Natural killer cell (primary cell): ENCODE measurements at regions of chr20 and their contacts with region 1.

Region 1: GRCh38 chr20:8722276-8722928 is 346.5 kb upstream of the PLCB4 start:
- DNase-seq: peak in 1 of 2 donors; percentile 73
- ATAC-seq: peak; percentile 73 to 81 (median 73)
- H3K4me3 ChIP-seq: no peak overlapping the region
- H3K4me3 Mint-ChIP-seq: no peak overlapping the region
- H3K27ac ChIP-seq: no peak overlapping the region
- H3K27ac Mint-ChIP-seq: no peak overlapping the region
- H3K4me1 ChIP-seq: no peaks in the 10 kb centered on the region
- H3K4me1 Mint-ChIP-seq: no peaks in the 10 kb centered on the region
- H3K27me3 ChIP-seq: no peaks in the 10 kb centered on the region
- H3K27me3 Mint-ChIP-seq: no peaks in the 10 kb centered on the region
- CTCF ChIP-seq: peak; percentile 94

Region 2: DNA sequence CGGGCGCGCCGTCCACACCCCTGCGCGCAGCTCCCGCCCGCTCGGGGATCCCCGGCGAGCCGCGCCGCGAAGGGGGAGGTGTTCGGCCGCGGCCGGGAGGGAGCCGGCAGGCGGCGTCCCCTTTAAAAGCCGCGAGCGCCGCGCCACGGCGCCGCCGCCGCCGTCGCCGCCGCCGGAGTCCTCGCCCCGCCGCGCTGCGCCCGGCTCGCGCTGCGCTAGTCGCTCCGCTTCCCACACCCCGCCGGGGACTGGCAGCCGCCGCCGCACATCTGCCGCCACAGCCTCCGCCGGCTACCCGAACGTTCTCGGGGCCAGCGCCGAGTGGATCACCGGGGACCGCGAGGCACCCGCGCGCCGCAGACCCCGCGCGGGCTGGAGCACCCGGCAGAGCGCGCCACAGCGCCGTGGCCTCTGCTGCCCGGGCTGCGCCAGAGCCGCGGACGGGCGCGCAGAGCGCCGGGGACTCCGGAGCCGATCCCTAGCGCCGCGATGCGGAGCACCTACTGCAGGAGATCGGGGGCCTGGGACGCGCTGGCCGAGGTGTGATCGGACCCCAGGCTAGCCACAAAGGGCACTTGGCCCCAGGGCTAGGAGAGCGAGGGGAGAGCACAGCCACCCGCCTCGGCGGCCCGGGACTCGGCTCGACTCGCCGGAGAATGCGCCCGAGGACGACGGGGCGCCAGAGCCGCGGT is 1954.7 kb before region 1 on chr20 and contains the start of gene BMP2:
- intact Hi-C with region 1: loop called (anchors 10 kb)
- DNase-seq: peak in 1 of 2 donors; percentile 15
- ATAC-seq: peak; percentile 40 to 75 (median 67)
- H3K4me3 ChIP-seq: peak within 1 kb of the TSS; percentile 43
- H3K4me3 Mint-ChIP-seq: peak within 1 kb of the TSS; percentile 71
- H3K27ac ChIP-seq: peak within 1 kb of the TSS; percentile 30
- H3K27ac Mint-ChIP-seq: no peak within 1 kb of the TSS
- H3K4me1 ChIP-seq: peaks cover 21% of the 10 kb centered on the region
- H3K4me1 Mint-ChIP-seq: peaks cover 7 to 10% of the 10 kb centered on the region in 2 donors
- H3K27me3 ChIP-seq: peaks cover 9% of the 10 kb centered on the region
- H3K27me3 Mint-ChIP-seq: peaks cover 32 to 39% of the 10 kb centered on the region in 2 donors
- CTCF ChIP-seq: no peak
- total RNA-seq, gene BMP2: 0.45 to 0.66 (median 0.45) TPM

Region 3: GRCh38 chr20:6828794-6829423 is 1893.5 kb before region 1 on chr20:
- intact Hi-C with region 1: loop called (anchors 5 kb)
- DNase-seq: peak; percentile 15 to 36
- ATAC-seq: peak; percentile 63 to 79 (median 63)
- H3K4me3 ChIP-seq: no peak overlapping the region
- H3K4me3 Mint-ChIP-seq: no peak overlapping the region
- H3K27ac ChIP-seq: no peak overlapping the region
- H3K27ac Mint-ChIP-seq: no peak overlapping the region
- H3K4me1 ChIP-seq: no peaks in the 10 kb centered on the region
- H3K4me1 Mint-ChIP-seq: no peaks in the 10 kb centered on the region
- H3K27me3 ChIP-seq: no peaks in the 10 kb centered on the region
- H3K27me3 Mint-ChIP-seq: no peaks in the 10 kb centered on the region
- CTCF ChIP-seq: peak; percentile 46

Region 4: DNA sequence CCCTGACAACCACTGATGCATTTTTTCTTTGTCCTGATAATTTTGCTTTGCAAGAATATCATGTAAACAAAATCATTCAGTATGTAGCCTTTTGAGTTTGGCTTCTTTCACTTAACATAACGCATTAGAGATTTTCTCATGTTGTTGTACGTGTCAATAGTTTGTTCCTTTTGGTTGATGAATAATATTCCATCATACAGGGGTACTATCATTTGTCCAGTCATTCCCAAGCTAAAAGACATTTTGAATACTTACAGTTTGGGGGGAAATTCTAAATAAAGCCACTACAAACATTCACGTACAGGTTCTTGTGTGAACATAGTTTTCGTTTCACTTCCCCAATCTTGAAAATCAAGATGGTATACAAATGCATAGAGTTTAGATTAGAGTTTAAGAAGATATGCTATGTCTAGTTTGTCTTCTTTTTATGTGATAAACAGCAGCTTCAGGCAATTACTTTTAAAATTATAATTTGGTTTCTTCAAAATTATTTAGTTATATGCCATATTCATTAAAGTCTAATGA is 787.3 kb before region 1 on chr20:
- intact Hi-C with region 1: loop called (anchors 1 kb)
- DNase-seq: no peak
- ATAC-seq: no peak
- H3K4me3 ChIP-seq: no peak overlapping the region
- H3K4me3 Mint-ChIP-seq: no peak overlapping the region
- H3K27ac ChIP-seq: no peak overlapping the region
- H3K27ac Mint-ChIP-seq: no peak overlapping the region
- H3K4me1 ChIP-seq: no peaks in the 10 kb centered on the region
- H3K4me1 Mint-ChIP-seq: peaks cover 0 to 6% of the 10 kb centered on the region in 2 donors
- H3K27me3 ChIP-seq: no peaks in the 10 kb centered on the region
- H3K27me3 Mint-ChIP-seq: peaks cover 12 to 23% of the 10 kb centered on the region in 2 donors
- CTCF ChIP-seq: no peak

Region 5: DNA sequence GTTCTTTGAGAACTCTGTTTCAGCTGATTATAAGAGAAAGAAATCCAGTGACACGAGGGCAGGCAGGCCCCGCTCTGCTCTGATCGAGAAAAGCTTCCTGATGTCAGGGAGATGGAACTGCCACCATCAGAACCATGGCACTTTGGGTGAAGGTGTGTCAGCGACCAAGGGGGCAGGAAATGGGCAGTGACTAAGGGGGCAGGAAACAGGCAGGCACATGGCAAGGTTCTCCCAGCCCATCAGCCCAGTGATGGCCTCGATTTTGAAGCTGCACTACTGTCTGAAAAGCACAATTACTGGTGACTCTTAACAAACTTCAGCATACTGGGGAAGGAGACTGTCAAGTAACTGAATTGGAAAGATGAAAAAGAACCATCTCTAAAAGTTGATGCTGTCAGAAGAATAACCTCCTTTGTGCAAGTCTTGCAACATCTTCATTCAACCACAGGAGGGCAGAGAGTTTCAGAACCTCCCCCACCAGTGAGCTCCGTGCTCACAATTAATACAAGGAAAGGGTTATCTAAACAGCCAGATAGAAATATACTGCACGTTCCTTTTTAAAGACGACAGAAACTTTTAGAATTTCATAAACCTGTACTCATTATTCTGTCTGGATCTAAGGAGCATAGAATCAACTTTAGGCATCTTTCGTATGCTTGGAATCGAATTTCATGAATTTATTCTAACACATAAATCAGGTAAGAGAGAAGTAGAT is 741.9 kb before region 1 on chr20:
- intact Hi-C with region 1: loop called (anchors 2 kb)
- DNase-seq: peak in 1 of 2 donors; percentile 35
- ATAC-seq: peak; percentile 56 to 69 (median 62)
- H3K4me3 ChIP-seq: no peak overlapping the region
- H3K4me3 Mint-ChIP-seq: no peak overlapping the region
- H3K27ac ChIP-seq: no peak overlapping the region
- H3K27ac Mint-ChIP-seq: peak overlapping the region; percentile 0 to 62
- H3K4me1 ChIP-seq: peaks cover 4% of the 10 kb centered on the region
- H3K4me1 Mint-ChIP-seq: peaks cover 10 to 13% of the 10 kb centered on the region in 2 donors
- H3K27me3 ChIP-seq: no peaks in the 10 kb centered on the region
- H3K27me3 Mint-ChIP-seq: no peaks in the 10 kb centered on the region
- CTCF ChIP-seq: no peak

Region 6: GRCh38 chr20:8043687-8044282 is 678.6 kb before region 1 on chr20:
- intact Hi-C with region 1: loop called (anchors 1 kb)
- DNase-seq: peak in 1 of 2 donors; percentile 84
- ATAC-seq: peak; percentile 64 to 84 (median 76)
- H3K4me3 ChIP-seq: no peak overlapping the region
- H3K4me3 Mint-ChIP-seq: no peak overlapping the region
- H3K27ac ChIP-seq: no peak overlapping the region
- H3K27ac Mint-ChIP-seq: no peak overlapping the region
- H3K4me1 ChIP-seq: no peaks in the 10 kb centered on the region
- H3K4me1 Mint-ChIP-seq: peaks cover 0 to 4% of the 10 kb centered on the region in 2 donors
- H3K27me3 ChIP-seq: no peaks in the 10 kb centered on the region
- H3K27me3 Mint-ChIP-seq: peaks cover 10 to 21% of the 10 kb centered on the region in 2 donors
- CTCF ChIP-seq: peak; percentile 97